GM18951 (cell line): ENCODE measurements at regions of chr11 and their contacts with region 1.

Region 1: GRCh38 chr11:117807482-117808327 is 10.7 kb upstream of the DSCAML1 start:
- POLR2A ChIP-seq: no peak

Region 2: GRCh38 chr11:117426269-117426685 is 381.4 kb before region 1 on chr11:
- in situ Hi-C with region 1: loop called (anchors 10 kb)
- POLR2A ChIP-seq: no peak

Region 3: GRCh38 chr11:117929195-117929915 is 121.7 kb after region 1 on chr11 and contains the start of gene TMPRSS13:
- in situ Hi-C with region 1: no loop called
- POLR2A ChIP-seq: no peak